ENCODE measurements at regions of chr1 and their contacts with region 1.

Region 1: DNA sequence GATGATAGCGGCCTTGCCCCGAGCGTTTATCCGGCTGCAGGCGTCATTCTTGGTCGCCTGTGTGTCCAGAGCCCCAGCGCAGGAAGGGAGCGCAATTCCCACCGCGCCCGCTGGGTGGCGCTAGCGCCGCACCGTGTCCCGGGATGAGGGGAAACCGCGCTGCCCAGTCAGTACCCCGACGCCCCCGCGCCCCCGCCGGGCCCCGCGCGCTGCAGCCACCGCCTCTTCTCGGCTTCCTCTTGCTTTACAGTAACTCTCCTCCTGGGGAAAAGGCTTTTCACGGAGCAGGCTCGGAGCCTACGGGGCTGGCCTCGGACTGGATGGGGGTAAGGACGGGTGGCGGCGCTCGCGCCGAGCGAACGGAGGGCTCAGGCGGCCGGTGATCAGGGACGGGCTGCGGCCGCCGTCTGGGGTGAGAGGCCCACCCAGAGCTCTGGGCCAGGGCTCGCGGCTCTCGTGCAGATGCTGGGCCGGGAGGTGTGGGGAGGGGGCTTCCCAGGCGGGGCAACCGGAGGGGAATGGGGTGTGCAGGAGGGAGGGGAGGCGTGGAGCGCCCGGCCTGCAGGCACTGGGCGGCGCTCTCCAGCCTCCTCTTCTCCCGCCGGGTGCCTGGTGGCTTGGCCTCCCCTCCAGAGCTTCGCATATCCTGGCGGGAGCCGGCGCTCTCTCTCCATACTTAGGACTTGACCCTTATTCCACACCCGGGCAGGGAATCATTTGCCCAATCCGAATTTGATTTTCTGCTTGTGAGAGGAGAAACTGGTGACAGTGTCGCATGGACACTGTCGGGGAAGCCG is 29.8 kb downstream of the TEX35 start:
- DNase-seq: peak; percentile 98
- H3K4me3 Mint-ChIP-seq: peak overlapping the region; percentile 95
- H3K27ac Mint-ChIP-seq: peak overlapping the region; percentile 56
- H3K4me1 Mint-ChIP-seq: peaks cover 38% of the 10 kb centered on the region
- H3K27me3 Mint-ChIP-seq: no peaks in the 10 kb centered on the region
- CTCF ChIP-seq: peak; percentile 97

Region 2: DNA sequence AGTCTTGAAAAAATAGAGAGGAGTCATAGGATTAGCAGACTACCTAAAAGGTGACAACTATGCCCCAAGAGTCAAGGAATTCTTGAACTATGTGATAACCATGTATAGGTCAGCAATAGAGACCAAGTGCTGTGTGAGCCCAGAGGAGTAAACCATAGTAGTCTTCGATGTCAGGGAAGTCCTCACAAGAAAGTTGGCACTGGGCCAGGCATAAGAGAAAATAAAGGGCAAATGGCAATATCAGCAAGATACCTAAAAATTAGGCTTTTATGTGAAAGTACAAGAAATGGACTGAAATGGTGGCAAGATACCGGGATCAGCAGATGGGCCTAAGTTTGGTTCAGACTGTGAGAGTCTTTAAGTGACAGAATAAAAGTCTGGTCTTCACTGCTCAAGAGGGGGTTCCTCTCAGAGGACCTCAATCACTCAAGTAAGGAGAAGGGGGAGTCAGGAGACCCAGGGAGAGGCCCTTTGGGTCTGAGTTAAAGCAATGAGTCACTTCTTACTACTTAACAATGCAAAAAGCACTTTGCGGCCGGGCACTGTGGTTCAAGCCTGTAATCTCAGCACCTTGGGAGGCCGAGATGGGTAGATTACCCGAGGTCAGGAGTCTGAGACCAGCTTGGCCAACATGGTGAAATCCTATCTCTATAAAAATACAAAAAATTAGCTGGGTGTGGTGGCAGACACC is 65.1 kb after region 1 on chr1:
- CTCF ChIA-PET with region 1: no interaction called
- intact Hi-C with region 1: loop called (anchors 2 kb)
- DNase-seq: no peak
- H3K4me3 Mint-ChIP-seq: no peak overlapping the region
- H3K27ac Mint-ChIP-seq: peak overlapping the region; percentile 92
- H3K4me1 Mint-ChIP-seq: peaks cover 58% of the 10 kb centered on the region
- H3K27me3 Mint-ChIP-seq: no peaks in the 10 kb centered on the region
- CTCF ChIP-seq: no peak

Region 3: GRCh38 chr1:178725603-178726517 is 183.1 kb after region 1 on chr1:
- CTCF ChIA-PET with region 1: interaction called, 13 read pairs
- intact Hi-C with region 1: loop called (anchors 1 kb)
- DNase-seq: peak; percentile 84
- H3K4me3 Mint-ChIP-seq: peak overlapping the region; percentile 84
- H3K27ac Mint-ChIP-seq: peak overlapping the region; percentile 88
- H3K4me1 Mint-ChIP-seq: peaks cover 35% of the 10 kb centered on the region
- H3K27me3 Mint-ChIP-seq: no peaks in the 10 kb centered on the region
- CTCF ChIP-seq: no peak

Region 4: GRCh38 chr1:178774263-178774662 is 231.5 kb after region 1 on chr1:
- CTCF ChIA-PET with region 1: no interaction called
- intact Hi-C with region 1: loop called (anchors 2 kb)
- DNase-seq: no peak
- H3K4me3 Mint-ChIP-seq: no peak overlapping the region
- H3K27ac Mint-ChIP-seq: no peak overlapping the region
- H3K4me1 Mint-ChIP-seq: no peaks in the 10 kb centered on the region
- H3K27me3 Mint-ChIP-seq: no peaks in the 10 kb centered on the region
- CTCF ChIP-seq: peak; percentile 28

Region 5: GRCh38 chr1:179002552-179003345 is 460.0 kb after region 1 on chr1:
- CTCF ChIA-PET with region 1: interaction called, 27 read pairs
- intact Hi-C with region 1: no loop called
- DNase-seq: peak; percentile 88
- H3K4me3 Mint-ChIP-seq: peak overlapping the region; percentile 30
- H3K27ac Mint-ChIP-seq: no peak overlapping the region
- H3K4me1 Mint-ChIP-seq: peaks cover 10% of the 10 kb centered on the region
- H3K27me3 Mint-ChIP-seq: no peaks in the 10 kb centered on the region
- CTCF ChIP-seq: peak; percentile 97